A673 (cell line): ENCODE measurements at regions of chr22 and their contacts with region 1.

Region 1: GRCh38 chr22:45553351-45554039 is 50.8 kb downstream of the FBLN1 start:
- DNase-seq: peak; percentile 86
- H3K4me3 ChIP-seq: no peak overlapping the region
- H3K27ac ChIP-seq: no peak overlapping the region
- H3K4me1 ChIP-seq: no peaks in the 10 kb centered on the region
- H3K27me3 ChIP-seq: no peaks in the 10 kb centered on the region
- CTCF ChIP-seq: peak; percentile 99

Region 2: DNA sequence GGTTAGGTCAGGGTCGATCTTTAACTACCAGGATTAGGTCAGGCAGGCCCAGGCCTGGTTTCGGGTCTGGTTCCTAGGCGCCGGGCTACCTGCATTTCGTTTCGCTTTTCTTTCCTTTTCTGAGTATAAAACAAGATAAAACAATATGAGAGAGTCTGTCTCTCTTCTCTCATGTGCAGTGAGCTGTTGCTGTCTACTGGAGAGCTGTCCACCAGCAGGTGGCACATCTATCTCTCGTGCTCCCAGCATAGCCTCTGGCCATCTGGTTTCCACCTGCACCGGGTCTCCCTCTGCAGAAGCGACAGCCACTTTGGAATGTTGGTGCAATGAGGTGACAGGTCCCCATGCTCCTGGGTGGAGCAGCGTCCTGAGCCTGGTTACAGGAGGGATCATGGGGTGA is 112.4 kb before region 1 on chr22:
- CTCF ChIA-PET with region 1: interaction called, 20 read pairs
- POLR2A ChIA-PET with region 1: no interaction called
- intact Hi-C with region 1: loop called (anchors 1 kb)
- DNase-seq: peak; percentile 64
- H3K4me3 ChIP-seq: no peak overlapping the region
- H3K27ac ChIP-seq: no peak overlapping the region
- H3K4me1 ChIP-seq: no peaks in the 10 kb centered on the region
- H3K27me3 ChIP-seq: no peaks in the 10 kb centered on the region
- CTCF ChIP-seq: peak; percentile 76